Aorta (tissue), 5 donors: ENCODE measurements at regions of chr9 and their contacts with region 1.

Region 1: DNA sequence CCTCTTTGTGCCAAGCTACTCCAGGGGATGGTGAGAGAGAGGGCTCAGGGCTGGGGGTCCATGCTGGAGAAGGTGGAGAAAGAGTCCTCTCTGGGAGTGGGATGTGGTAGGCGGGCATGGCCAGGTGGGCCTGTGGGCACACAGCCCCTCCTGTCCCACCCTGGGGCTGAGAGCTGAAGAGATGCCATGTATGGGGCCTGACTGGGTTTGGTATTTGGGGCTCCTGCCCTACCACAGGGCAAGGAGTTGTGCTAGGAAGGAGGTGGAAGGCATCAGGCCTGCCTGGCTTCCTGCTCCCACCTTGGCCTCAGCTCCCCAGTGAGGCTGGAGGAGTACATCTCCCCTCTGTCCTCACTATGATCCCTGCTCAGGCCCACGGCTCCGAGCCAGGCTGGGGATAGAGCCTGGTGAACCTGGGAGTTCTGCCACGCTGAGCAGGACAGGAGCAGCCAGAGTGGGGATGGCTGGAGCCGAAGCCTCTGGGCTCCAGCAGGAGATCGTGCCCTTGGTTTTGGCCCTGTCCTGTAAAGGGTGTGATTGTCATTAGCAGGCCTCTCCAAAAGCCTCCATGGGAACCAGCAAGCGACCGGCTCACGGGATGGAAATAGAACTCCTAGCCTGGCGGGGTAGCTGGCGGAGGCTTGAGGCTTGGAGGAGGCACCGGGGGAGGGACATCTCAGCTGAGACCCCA is 75.5 kb downstream of the CACNA1B start:
- DNase-seq: no peak
- ATAC-seq: no peak
- H3K4me3 ChIP-seq: no peak overlapping the region
- H3K27ac ChIP-seq: no peak overlapping the region
- H3K4me1 ChIP-seq: no peaks in the 10 kb centered on the region
- H3K27me3 ChIP-seq: no peaks in the 10 kb centered on the region

Region 2: GRCh38 chr9:137866226-137867141 is 86.6 kb before region 1 on chr9:
- intact Hi-C with region 1: loop called in 1 of 2 experiments (anchors 5 kb)
- DNase-seq: no peak
- ATAC-seq: no peak
- H3K4me3 ChIP-seq: no peak overlapping the region
- H3K27ac ChIP-seq: no peak overlapping the region
- H3K4me1 ChIP-seq: no peaks in the 10 kb centered on the region
- H3K27me3 ChIP-seq: no peaks in the 10 kb centered on the region